ENCODE measurements at regions of chr4 and their contacts with region 1.

Region 1: DNA sequence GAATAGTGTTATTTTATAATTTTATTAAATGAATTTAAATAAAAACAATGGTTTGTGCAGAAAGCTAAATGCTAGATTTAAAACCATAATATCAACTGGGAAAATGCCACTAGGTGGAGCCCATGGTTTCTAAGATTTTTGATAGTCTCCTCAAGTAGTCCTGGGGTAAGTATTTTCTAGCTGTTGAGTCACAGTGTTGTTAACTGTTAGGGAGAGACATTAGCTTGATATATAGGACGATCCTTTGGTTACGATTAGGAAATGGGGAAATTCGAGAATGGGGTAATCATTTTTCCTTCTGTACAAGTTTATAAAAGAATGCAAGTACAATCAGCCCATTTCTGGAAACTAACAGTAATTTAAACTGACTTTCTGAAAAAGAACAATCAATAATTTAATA is 378.4 kb downstream of the ANKRD50 start:
- DNase-seq: peak; percentile 24
- ATAC-seq: peak; percentile 44; the same call in 1 of the 3 replicates
- H3K4me3 ChIP-seq: no peak overlapping the region
- H3K27ac ChIP-seq: no peak overlapping the region
- H3K4me1 ChIP-seq: no peaks in the 10 kb centered on the region
- H3K27me3 ChIP-seq: no peaks in the 10 kb centered on the region
- CTCF ChIP-seq: peak; percentile 50
- EP300 ChIP-seq: no peak
- POLR2A ChIP-seq: no peak
- RAD21 ChIP-seq: no peak

Region 2: GRCh38 chr4:124940387-124940786 is 606.3 kb after region 1 on chr4:
- CTCF ChIA-PET with region 1: no interaction called
- POLR2A ChIA-PET with region 1: no interaction called
- in situ Hi-C with region 1: no loop called
- intact Hi-C with region 1: loop called (anchors 10 kb)
- DNase-seq: no peak
- ATAC-seq: no peak
- H3K4me3 ChIP-seq: no peak overlapping the region
- H3K27ac ChIP-seq: no peak overlapping the region
- H3K4me1 ChIP-seq: no peaks in the 10 kb centered on the region
- H3K27me3 ChIP-seq: no peaks in the 10 kb centered on the region
- CTCF ChIP-seq: no peak
- EP300 ChIP-seq: no peak
- POLR2A ChIP-seq: no peak
- RAD21 ChIP-seq: no peak

Region 3: GRCh38 chr4:125021189-125021588 is 687.1 kb after region 1 on chr4:
- CTCF ChIA-PET with region 1: no interaction called
- POLR2A ChIA-PET with region 1: no interaction called
- in situ Hi-C with region 1: no loop called
- intact Hi-C with region 1: no loop called
- DNase-seq: no peak
- ATAC-seq: no peak
- H3K4me3 ChIP-seq: no peak overlapping the region
- H3K27ac ChIP-seq: no peak overlapping the region
- H3K4me1 ChIP-seq: no peaks in the 10 kb centered on the region
- H3K27me3 ChIP-seq: no peaks in the 10 kb centered on the region
- CTCF ChIP-seq: no peak
- EP300 ChIP-seq: no peak
- POLR2A ChIP-seq: no peak
- RAD21 ChIP-seq: no peak

Region 4: DNA sequence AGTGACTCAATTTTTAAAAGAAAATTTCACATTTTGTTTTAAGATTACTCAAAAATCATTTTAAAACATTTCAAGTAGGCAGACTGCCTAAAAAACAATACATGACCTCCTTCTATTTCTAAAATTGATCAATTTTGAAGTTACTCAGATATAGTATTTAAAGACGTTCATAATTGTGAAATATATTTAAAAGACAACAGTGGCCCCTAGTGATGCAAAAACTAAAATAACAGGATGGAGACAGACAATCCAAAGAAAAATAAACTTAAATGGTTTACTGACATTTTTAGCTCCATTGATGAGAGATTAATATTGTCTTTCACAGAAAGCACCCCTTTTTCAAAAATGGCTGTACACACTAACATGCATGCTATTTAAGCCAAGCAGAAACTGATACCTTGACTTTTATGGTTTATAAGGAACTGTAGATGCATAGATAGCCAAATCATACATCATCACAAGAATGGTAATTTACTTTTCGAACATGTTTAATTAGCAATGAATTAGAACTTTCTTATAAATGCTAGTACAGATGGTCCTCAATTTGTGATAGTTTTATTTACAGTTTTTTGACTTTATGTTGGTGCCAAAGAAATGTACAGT is 910.8 kb after region 1 on chr4:
- CTCF ChIA-PET with region 1: interaction called, 4 read pairs
- POLR2A ChIA-PET with region 1: no interaction called
- in situ Hi-C with region 1: loop called (anchors 25 kb)
- intact Hi-C with region 1: no loop called
- DNase-seq: no peak
- ATAC-seq: no peak
- H3K4me3 ChIP-seq: no peak overlapping the region
- H3K27ac ChIP-seq: no peak overlapping the region
- H3K4me1 ChIP-seq: no peaks in the 10 kb centered on the region
- H3K27me3 ChIP-seq: no peaks in the 10 kb centered on the region
- CTCF ChIP-seq: no peak
- EP300 ChIP-seq: no peak
- POLR2A ChIP-seq: no peak
- RAD21 ChIP-seq: no peak

Region 5: DNA sequence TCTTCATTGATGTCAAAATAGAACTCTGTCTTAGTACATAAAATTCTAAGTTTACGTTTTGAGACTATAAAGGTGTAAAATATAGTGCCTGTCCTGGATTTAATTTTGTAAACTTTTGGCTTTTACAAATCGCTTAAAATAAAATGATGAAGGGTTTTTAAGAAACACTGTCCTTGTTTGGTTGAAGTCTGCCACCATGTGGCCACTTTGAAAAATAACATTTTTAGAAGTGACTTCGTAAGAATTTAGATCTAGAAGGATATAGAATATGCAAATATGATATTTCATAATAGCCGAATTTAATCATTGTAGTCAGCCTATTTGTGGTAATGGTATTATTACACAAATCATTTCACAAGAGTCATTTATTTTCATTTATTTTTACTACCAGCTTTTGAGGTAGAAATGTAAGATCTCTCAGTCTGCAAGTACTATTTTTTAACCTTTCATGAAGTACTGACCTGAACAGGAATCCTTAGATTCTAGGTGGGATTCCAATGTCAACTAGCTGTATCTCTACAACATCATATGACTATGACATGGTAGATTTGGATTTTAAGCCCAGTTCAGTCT is 949.7 kb after region 1 on chr4:
- CTCF ChIA-PET with region 1: interaction called, 18 read pairs
- POLR2A ChIA-PET with region 1: no interaction called
- in situ Hi-C with region 1: no loop called
- intact Hi-C with region 1: loop called (anchors 1 kb)
- DNase-seq: peak; percentile 4
- ATAC-seq: no peak
- H3K4me3 ChIP-seq: no peak overlapping the region
- H3K27ac ChIP-seq: no peak overlapping the region
- H3K4me1 ChIP-seq: no peaks in the 10 kb centered on the region
- H3K27me3 ChIP-seq: no peaks in the 10 kb centered on the region
- CTCF ChIP-seq: peak; percentile 55
- EP300 ChIP-seq: no peak
- POLR2A ChIP-seq: no peak
- RAD21 ChIP-seq: no peak

Measured in HepG2 (cell line).